ENCODE measurements at regions of chr2 and their contacts with region 1.

Region 1: DNA sequence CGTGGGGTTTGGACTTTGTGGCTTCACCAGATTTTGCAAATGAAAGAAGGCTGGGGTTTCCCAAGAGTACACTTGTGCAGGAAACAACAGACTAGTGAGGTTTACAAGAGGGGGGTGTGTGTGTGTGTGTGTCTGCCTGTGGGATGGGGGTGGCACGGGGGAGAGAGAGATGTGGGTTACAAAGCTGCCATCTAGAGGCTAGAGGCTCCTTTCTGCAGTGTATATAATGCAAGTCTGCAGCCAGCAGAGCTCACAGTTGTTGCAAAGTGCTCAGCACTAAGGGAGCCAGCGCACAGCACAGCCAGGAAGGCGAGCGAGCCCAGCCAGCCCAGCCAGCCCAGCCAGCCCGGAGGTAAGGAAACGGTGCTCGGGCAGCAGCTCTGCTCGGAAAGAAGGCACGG is at the start of gene ACKR3:
- DNase-seq: peak; percentile 83
- ATAC-seq: peak; percentile 81
- total RNA-seq, gene ACKR3: 30.5 TPM

Region 2: DNA sequence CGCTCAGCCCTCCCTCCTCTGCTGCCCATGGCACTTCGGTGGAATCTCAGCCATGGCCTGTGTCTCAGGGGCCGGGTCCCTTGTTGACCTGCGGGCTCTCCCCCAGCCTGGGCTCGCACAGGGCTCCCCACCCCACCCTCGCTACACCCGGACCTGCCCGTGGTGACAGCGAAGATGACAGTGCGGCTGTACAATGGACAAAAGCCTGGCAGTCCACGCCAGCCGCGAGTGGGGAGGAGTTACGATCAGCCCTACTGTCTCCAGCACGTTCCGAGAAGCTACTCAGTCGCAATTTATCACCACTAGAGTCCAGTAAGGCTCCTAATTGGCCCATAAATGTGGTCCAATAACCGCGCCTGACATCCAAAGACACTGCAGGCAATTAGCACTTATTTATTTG is 433.0 kb before region 1 on chr2:
- intact Hi-C with region 1: no loop called
- DNase-seq: no peak
- ATAC-seq: no peak

Region 3: DNA sequence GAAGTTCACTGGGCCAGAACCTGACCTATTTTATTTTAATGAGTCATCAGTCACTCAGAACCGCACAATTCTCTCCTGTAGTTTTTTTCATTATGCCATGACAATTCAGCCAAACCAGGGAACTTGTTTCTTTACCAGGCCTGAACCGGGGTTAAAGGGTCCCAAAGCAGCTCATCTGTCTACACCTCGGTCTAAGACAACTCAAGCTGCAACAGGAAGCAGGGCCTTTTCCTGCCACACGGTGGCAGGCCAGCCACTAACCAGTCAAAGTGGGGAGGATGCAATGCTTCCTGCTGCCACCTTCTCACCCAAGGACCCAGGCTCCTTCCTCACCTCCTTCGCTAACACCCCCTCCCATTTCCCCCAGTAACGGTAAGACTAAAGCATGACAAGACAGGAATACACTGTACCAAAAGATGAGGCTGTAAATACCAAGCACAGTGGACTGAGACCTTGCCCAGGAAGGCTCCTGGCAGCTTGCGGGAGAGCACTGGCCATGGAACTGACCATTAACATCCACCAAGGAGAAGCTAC is 56.6 kb before region 1 on chr2:
- intact Hi-C with region 1: loop called (anchors 2 kb)
- DNase-seq: peak; percentile 82
- ATAC-seq: peak; percentile 83

Region 4: DNA sequence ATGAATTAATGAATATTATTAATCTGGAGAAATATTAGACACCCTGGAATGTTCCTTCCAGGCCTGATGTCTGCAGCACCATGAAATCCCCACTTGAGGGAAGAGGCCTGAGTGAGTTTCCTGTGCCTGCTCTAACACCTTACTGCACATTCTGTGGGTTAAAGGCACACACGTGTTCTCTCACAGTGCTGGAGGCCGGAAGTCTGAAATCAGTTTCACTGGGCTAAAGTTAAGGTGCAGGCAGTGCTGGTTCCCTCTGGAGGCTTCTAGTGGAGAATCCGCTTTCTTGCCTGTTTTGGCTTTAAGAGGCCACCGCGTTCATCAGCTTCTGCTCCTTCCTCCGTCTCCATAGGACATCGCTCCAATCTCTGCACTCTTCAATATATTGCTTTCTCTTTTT is 48.8 kb after region 1 on chr2:
- intact Hi-C with region 1: no loop called
- DNase-seq: no peak
- ATAC-seq: no peak

Region 5: GRCh38 chr2:236687296-236687965 is 117.9 kb after region 1 on chr2:
- intact Hi-C with region 1: loop called (anchors 5 kb)
- DNase-seq: no peak
- ATAC-seq: peak; percentile 66

Region 6: DNA sequence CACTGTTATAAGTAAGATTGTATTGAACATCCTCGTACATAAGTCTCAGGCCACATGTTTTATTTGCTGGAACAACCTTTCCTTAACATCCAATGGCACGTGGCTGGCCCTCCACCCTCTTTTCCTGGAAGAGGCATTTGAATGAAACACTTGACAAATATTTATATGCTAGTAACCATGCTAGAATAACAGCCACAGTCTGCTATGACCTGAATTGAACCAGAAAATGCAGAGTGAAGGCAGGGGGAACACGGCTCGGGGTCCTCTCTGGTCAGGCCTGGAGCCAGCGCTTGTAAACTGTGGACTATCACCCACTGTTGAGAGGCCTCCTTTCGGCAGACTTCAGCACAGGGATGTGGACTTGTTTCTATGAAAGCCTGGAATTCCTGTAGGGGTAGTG is 318.0 kb after region 1 on chr2:
- intact Hi-C with region 1: loop called (anchors 5 kb)
- DNase-seq: no peak
- ATAC-seq: peak; percentile 51